CD4-positive, alpha-beta memory T cell (primary cell): ENCODE measurements at regions of chr4 and their contacts with region 1.

Region 1: DNA sequence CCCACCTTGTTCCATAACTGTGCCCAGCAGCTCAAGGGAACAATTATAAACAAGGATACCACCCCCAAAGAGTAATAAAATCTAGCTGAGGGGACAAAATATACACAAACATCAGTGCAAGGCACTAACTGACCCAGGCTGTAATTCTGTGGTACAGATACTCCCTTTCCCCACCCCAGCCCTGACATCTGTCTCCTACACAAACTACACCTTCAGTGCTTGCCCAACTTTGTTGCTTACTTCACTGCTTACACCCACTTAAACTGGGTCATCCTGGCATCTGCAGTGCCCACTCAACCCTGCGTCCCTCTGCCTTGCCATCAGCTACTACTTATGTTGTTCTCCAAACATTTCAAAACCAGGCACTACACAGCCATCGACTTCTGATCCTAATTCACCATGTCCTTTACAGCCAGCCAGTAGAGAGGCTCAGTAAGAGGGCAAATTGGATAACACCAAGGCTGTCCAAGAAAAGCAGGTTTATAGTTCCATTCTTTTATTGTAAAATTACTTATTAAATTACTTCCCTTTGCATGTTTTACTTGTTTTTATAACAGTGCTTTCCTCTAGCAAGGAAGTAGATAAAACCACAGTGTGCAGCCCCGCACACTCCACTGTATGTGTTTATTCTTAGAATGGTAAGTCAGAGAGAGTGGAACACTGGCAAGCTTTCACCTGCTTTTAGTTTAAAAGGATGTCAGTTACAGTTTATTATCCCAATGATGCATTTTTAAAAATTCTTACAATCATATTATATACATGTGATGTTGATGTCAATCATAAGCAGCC is 149.6 kb downstream of the INPP4B start:
- DNase-seq: peak in 4 of 5 donors; percentile 15 to 26 (median 22)
- H3K4me3 ChIP-seq: peak overlapping the region in 1 of 2 donors; percentile 22
- H3K4me3 Mint-ChIP-seq: peak overlapping the region in 7 of 8 donors; percentile 59 to 86 (median 73)
- H3K27ac ChIP-seq: peak overlapping the region; percentile 34
- H3K27ac Mint-ChIP-seq: peak overlapping the region in 6 of 7 donors; percentile 89 to 98 (median 95)
- H3K4me1 ChIP-seq: peaks cover 69% of the 10 kb centered on the region
- H3K4me1 Mint-ChIP-seq: peaks cover 53 to 69% (median 58%) of the 10 kb centered on the region in 4 donors
- H3K27me3 ChIP-seq: no peaks in the 10 kb centered on the region
- H3K27me3 Mint-ChIP-seq: no peaks in the 10 kb centered on the region

Region 2: DNA sequence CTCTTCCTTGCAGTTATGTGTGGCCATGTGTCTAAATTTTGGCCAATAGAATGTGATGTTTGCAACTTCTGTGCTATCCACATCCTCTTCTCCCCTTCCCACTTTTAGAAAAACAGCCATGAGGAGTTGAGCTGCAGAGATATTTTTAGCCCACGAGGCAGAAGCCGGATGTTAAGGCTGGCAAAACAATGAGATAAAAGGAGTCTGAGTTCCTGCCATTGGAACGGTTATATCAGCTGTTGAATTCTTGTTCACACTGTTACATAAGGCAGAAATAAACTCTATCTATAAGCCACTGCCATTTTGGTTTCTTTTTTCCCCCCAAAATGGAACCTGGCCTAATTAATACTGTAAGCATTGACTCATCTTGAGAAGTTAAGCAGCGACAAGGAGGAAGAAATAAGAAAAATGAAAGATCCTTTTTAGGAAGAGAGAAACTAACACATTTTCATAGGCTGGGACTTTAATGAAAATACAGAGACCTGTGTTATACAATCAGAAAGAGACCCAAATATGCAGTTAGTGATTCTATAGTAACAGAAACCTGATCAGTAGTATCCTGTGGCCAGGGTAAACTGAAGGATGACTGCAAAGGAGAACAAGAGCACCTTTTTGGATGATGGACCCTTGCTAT is 50.9 kb before region 1 on chr4:
- CTCF ChIA-PET with region 1: no interaction called
- POLR2A ChIA-PET with region 1: interaction called, 3 read pairs
- intact Hi-C with region 1: loop called (anchors 10 kb)
- DNase-seq: peak in 3 of 5 donors; percentile 1 to 10 (median 9)
- H3K4me3 ChIP-seq: no peak overlapping the region
- H3K4me3 Mint-ChIP-seq: peak overlapping the region in 6 of 8 donors; percentile 24 to 82 (median 69)
- H3K27ac ChIP-seq: no peak overlapping the region
- H3K27ac Mint-ChIP-seq: peak overlapping the region in 5 of 7 donors; percentile 31 to 74 (median 61)
- H3K4me1 ChIP-seq: peaks cover 21% of the 10 kb centered on the region
- H3K4me1 Mint-ChIP-seq: peaks cover 8 to 14% (median 13%) of the 10 kb centered on the region in 4 donors
- H3K27me3 ChIP-seq: no peaks in the 10 kb centered on the region
- H3K27me3 Mint-ChIP-seq: no peaks in the 10 kb centered on the region

Region 3: DNA sequence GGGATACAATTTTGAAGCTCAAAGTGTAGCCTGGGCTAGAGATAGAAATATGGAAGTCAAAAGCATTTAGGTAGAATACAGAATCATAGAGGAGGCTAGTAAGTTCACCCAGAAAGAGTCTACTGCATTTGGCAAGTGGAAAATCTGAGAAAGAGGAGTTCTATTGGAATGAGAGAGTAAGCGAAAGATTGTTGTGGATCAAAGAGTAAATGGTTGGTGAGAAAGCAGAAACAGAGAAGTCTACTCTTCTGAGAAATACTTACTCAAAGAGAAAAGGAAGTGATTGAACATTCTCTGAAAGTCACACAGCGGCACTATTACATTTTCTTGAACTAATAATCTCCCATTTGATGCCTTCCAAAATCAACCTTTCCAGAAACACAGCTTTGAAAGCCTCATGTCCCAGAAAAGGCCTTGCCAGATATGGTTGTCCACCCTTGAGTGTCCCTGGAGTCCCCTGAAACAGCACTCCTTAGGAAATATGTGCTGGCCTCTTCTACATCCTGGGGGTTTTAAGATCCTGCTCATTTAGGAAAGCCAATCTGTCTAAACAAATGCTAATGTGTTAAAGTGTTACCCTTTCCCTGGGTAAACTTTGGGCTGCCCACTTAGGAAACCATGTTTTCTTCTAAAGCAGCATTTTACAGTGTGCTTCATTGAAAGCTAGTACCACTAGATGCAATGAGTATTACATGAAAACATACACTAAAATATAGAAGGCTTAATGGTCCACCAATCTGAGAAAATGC is 16.9 kb after region 1 on chr4:
- CTCF ChIA-PET with region 1: interaction called, 7 read pairs
- POLR2A ChIA-PET with region 1: interaction called, 40 read pairs
- intact Hi-C with region 1: loop called (anchors 2 kb)
- DNase-seq: no peak
- H3K4me3 ChIP-seq: no peak overlapping the region
- H3K4me3 Mint-ChIP-seq: peak overlapping the region in 7 of 8 donors; percentile 43 to 75 (median 55)
- H3K27ac ChIP-seq: no peak overlapping the region
- H3K27ac Mint-ChIP-seq: peak overlapping the region; percentile 25 to 90 (median 81)
- H3K4me1 ChIP-seq: peaks cover 30% of the 10 kb centered on the region
- H3K4me1 Mint-ChIP-seq: peaks cover 42 to 58% (median 49%) of the 10 kb centered on the region in 4 donors
- H3K27me3 ChIP-seq: no peaks in the 10 kb centered on the region
- H3K27me3 Mint-ChIP-seq: no peaks in the 10 kb centered on the region